PC-9 (cell line): ENCODE measurements at regions of chr1 and their contacts with region 1.

Region 1: GRCh38 chr1:41432481-41433280 is 51.8 kb downstream of the EDN2 start:
- DNase-seq: peak; percentile 93 to 99
- H3K4me3 ChIP-seq: no peak overlapping the region
- H3K27ac ChIP-seq: peak overlapping the region; percentile 13; the same call in 1 of the 2 replicates
- H3K4me1 ChIP-seq: peaks cover 28% of the 10 kb centered on the region
- H3K27me3 ChIP-seq: no peaks in the 10 kb centered on the region
- CTCF ChIP-seq: peak; percentile 97

Region 2: GRCh38 chr1:40849801-40850592 is 582.7 kb before region 1 on chr1:
- CTCF ChIA-PET with region 1: no interaction called
- POLR2A ChIA-PET with region 1: no interaction called
- intact Hi-C with region 1: loop called (anchors 2 kb)
- DNase-seq: peak in 1 of 2 experiments; percentile 78
- H3K4me3 ChIP-seq: no peak overlapping the region
- H3K27ac ChIP-seq: no peak overlapping the region
- H3K4me1 ChIP-seq: no peaks in the 10 kb centered on the region
- H3K27me3 ChIP-seq: no peaks in the 10 kb centered on the region
- CTCF ChIP-seq: peak; percentile 93

Region 3: GRCh38 chr1:41268154-41268770 is 164.4 kb before region 1 on chr1:
- CTCF ChIA-PET with region 1: interaction called, 3 read pairs
- POLR2A ChIA-PET with region 1: no interaction called
- intact Hi-C with region 1: loop called (anchors 1 kb)
- DNase-seq: peak; percentile 50 to 81
- H3K4me3 ChIP-seq: no peak overlapping the region
- H3K27ac ChIP-seq: no peak overlapping the region
- H3K4me1 ChIP-seq: no peaks in the 10 kb centered on the region
- H3K27me3 ChIP-seq: no peaks in the 10 kb centered on the region
- CTCF ChIP-seq: peak; percentile 96

Region 4: DNA sequence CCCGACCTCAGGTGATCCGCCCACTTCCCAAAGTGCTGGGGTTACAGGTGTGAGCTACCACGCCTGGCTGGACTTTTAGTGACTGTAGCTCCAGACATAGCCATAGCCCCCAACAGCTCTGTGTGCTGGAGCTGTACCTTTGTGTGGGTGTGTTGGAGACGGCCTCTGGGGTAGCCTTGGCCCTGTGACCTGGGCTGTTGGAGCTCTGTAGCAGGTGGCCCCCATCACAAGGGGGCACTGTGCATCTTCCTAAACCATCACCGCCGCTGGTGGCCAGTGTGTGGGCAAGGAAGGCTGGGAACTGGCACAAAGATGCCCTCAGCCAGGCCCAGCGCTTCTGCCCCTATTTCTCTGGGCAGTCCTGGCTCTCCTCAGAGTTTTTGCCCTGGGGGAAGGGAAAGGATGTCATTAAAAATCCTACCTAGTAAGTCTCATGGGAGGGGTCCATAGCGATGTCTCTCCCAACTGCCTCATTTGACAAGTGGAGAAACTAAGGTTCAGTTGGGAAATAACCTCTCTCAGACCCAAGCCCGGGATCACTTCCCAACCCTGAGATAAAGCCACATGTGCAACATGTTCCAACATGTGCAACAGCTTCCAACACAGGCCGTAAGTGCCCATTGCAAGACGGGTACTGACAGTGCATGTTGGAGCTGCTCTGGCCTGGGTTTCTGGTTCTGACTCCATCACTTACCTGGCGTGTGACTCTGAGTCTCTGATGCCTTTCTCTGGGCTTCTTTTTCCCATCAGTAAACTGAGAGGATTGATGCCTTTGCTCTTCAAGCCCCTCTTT is 109.7 kb before region 1 on chr1:
- CTCF ChIA-PET with region 1: interaction called, 4 read pairs
- POLR2A ChIA-PET with region 1: no interaction called
- intact Hi-C with region 1: loop called (anchors 1 kb)
- DNase-seq: peak; percentile 60 to 82
- H3K4me3 ChIP-seq: no peak overlapping the region
- H3K27ac ChIP-seq: no peak overlapping the region
- H3K4me1 ChIP-seq: peaks cover 15% of the 10 kb centered on the region
- H3K27me3 ChIP-seq: no peaks in the 10 kb centered on the region
- CTCF ChIP-seq: peak; percentile 84

Region 5: GRCh38 chr1:41484372-41485241 is 51.9 kb after region 1 on chr1 and contains the start of gene EDN2:
- CTCF ChIA-PET with region 1: interaction called, 9 read pairs
- POLR2A ChIA-PET with region 1: no interaction called
- intact Hi-C with region 1: loop called (anchors 1 kb)
- DNase-seq: peak in 1 of 2 experiments; percentile 88
- H3K4me3 ChIP-seq: no peak within 1 kb of the TSS
- H3K27ac ChIP-seq: no peak within 1 kb of the TSS
- H3K4me1 ChIP-seq: peaks cover 27% of the 10 kb centered on the region
- H3K27me3 ChIP-seq: no peaks in the 10 kb centered on the region
- CTCF ChIP-seq: peak; percentile 49
- total RNA-seq, gene EDN2: 0.43 and 0.48 TPM in 2 replicates

Region 6: GRCh38 chr1:41504114-41505035 is 71.7 kb after region 1 on chr1:
- CTCF ChIA-PET with region 1: no interaction called
- POLR2A ChIA-PET with region 1: no interaction called
- intact Hi-C with region 1: loop called (anchors 2 kb)
- DNase-seq: peak; percentile 81 to 96
- H3K4me3 ChIP-seq: no peak overlapping the region
- H3K27ac ChIP-seq: peak overlapping the region; percentile 78
- H3K4me1 ChIP-seq: peaks cover 63% of the 10 kb centered on the region
- H3K27me3 ChIP-seq: no peaks in the 10 kb centered on the region
- CTCF ChIP-seq: no peak

Region 7: DNA sequence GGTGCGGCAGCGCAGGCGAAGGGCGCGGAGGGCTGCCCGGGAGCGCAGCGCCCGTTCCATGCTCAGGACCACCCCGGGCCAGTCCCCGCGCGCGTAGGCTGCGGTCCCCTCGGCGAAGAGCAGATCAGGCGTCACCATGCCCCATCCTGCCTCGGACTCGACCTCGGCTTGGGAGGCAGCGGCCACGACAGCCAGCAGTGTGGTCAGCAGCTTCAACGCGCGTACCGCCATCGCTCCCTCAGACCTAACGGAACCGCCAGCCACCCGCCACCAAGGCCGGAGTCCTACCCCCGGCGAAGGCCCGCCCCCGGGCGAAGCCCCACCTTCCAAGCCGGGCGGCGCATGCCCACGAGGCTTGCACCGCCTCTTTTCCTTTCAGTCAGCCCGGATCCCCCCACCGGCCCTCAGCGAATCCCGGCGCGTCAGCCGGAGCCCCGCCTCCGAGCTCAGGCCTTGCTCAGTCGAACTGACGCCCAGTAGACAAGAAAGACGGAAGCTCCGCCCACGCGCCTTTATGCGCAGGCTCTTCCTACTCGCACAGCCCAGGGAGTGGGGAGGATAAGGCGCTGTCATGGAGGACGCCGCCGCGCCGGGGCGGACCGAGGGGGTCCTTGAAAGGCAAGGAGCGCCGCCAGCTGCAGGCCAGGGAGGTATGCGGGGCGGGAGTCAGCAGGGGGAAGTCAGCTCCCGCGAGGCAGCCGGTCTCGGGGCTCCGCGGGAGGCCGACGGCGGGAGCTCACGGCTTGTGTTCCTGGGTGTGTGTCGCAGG is 1334.2 kb after region 1 on chr1 and contains the starts of genes C1orf50 and P3H1:
- CTCF ChIA-PET with region 1: no interaction called
- POLR2A ChIA-PET with region 1: no interaction called
- intact Hi-C with region 1: loop called (anchors 10 kb)
- DNase-seq: peak; percentile 96 to 100
- H3K4me3 ChIP-seq: peak within 1 kb of the TSS; percentile 86
- H3K27ac ChIP-seq: no peak within 1 kb of the TSS
- H3K4me1 ChIP-seq: peaks cover 24% of the 10 kb centered on the region
- H3K27me3 ChIP-seq: no peaks in the 10 kb centered on the region
- CTCF ChIP-seq: no peak
- total RNA-seq, gene C1orf50: 5.6 and 8.3 TPM in 2 replicates
- total RNA-seq, gene P3H1: 22.8 and 45.5 TPM in 2 replicates